HEK293T (cell line): ENCODE measurements at regions of chr3 and their contacts with region 1.

Region 1: GRCh38 chr3:38164966-38165680 is at the start of gene OXSR1:
- DNase-seq: peak; percentile 91

Region 2: DNA sequence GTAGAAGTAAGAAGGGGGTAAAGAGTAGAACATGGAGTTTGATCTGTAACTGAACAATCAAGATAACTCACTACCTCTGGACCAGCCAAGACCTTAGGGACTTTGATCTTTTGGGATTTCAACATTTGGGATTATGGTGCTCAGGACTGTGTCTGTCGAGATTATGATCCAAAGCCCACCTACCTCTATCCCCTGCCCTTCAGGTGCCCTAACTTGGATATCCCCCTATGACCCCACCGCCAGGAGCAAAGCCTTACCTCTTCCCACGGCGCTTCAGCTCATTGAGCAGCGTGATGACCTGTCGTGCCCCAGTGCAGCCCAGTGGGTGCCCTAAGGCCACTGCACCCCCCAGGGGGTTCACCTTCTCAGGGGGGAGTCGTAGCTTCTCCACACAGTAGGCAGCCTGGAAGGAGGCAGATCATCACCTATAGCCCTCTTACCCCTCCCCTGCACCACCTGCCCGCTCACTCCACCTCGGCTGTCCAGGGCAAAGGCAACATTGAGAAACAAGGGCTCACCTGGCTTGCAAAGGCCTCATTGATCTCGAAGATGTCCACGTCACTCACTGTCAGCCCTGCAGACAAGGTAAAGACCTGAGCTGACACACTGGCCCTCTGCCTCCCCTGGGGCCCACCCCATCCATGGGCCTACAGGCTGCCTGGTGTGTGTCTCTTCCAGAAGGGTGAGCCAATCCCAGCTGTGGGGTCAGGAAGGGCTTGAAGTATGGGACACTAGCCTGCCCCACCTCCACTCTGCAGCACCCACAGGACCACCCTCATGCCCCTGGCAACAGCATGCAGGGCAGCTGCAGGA is 39.6 kb before region 1 on chr3:
- CTCF ChIA-PET with region 1: no interaction called
- POLR2A ChIA-PET with region 1: no interaction called
- DNase-seq: no peak

Region 3: DNA sequence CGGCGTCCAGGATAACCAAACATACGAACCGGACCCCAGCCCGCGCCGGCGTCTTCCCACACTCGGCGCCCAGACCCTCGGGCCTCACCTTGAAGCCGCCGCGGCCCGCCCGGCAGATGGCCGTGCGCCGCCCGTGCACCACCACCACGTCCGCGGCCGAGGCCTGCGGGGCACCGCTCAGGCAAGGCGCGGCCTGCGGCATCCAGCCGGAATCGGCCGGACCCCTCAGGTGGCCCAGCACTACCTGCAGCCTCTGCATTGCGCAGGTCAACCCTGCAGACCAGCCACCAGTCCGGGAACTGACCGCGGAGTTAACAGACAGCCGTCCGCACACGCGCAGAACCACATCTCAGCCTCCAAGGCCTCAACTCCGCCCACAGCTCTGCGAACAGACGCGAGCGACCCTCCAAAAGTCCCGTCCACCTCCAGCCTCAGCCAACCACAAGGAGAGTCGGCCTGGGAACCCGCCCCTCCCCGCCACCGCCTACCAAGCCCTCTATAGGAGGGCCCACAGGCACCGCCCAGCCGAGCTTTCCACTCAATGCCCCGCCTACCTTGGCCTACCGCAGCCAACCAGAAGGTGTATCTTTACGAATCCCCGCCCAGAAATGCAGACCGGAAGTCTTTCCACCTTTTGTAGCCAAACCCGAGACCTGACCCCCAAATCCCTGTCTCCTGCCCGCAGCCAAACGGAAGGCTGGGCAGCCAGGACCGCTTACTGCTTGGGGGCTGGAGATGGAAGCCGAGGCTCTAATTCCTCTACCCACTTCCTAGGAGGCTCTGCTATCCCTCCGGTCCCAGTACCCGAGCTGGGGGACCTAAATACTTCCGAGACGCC is 28.1 kb before region 1 on chr3 and contains the start of gene ACAA1:
- CTCF ChIA-PET with region 1: interaction called, 8 read pairs
- POLR2A ChIA-PET with region 1: interaction called, 39 read pairs
- DNase-seq: peak; percentile 97

Region 4: GRCh38 chr3:38154033-38154494 is 11.1 kb before region 1 on chr3:
- CTCF ChIA-PET with region 1: interaction called, 4 read pairs
- POLR2A ChIA-PET with region 1: interaction called, 26 read pairs
- DNase-seq: no peak

Region 5: DNA sequence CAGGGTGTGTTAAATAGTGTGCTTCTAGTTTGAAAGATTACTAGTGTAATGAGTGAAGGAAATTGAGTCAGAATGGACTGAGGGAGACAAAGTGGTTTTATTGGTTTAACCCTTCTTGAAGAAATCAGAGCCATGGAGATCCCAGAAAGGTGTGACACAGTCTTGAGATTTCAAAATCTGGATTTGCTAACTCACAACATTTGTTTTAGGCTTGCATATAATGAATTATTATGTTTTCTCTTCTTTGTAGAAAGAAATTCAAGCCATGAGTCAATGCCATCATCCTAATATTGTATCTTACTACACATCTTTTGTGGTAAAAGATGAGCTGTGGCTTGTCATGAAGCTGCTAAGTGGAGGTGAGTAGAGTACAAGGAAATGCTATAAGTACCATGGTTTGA is 25.4 kb after region 1 on chr3:
- CTCF ChIA-PET with region 1: no interaction called
- POLR2A ChIA-PET with region 1: interaction called, 11 read pairs
- DNase-seq: no peak